ENCODE measurements at regions of chr11 and their contacts with region 1.

Region 1: GRCh38 chr11:86938900-86939880 is 16.0 kb downstream of the FZD4 start:
- DNase-seq: peak; percentile 38 to 81 (median 46)
- ATAC-seq: peak; percentile 59
- H3K4me3 ChIP-seq: no peak overlapping the region
- H3K27ac ChIP-seq: peak overlapping the region; percentile 75
- H3K4me1 ChIP-seq: peaks cover 18 to 53% of the 10 kb centered on the region in 2 experiments
- H3K27me3 ChIP-seq: no peaks in the 10 kb centered on the region
- CTCF ChIP-seq: peak; percentile 40 to 79 (median 67); a peak in 5 of 6 replicates
- EP300 ChIP-seq: no peak
- POLR2A ChIP-seq: no peak
- RAD21 ChIP-seq: peak; percentile 70 to 82

Region 2: DNA sequence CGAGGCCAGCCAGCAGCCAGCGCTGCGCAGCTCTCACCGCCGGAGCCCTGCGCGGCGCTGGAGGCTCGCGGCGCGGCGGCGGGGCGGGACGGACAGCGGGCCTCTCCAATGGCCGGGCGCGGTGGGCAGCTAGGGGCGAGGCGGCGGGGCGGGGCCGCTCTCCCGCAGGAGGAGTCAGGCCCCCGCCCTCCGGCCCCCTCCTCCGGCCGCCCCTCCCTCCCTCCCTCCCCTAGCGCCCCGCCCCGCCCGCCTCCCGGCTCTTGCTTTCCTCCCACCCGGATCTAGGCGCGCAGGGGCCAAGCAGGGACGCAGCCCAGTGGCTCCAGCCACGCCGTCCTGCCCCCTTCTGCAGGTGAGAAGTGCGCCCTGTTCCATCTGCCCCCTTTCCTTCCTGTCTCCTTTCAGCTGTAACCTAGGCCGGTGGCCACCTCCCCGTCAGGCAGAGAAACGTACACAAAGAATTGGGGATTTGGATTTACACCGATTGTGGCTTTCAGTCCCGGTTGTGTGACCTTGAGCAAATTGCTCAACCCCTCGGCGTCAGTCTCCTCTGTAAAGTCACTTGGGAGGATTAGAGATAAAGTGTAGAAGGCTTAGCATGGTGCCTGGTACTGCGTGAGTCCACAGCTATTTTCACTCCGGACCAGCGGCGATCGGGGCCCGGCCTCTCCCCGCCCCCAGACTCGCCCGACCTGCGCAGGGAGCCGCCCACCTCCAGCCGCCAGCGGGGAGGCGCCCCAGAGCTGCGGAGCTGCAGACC is 16.4 kb after region 1 on chr11 and contains the start of gene FZD4:
- CTCF ChIA-PET with region 1: no interaction called
- POLR2A ChIA-PET with region 1: interaction called, 18 read pairs
- in situ Hi-C with region 1: no loop called
- intact Hi-C with region 1: no loop called
- DNase-seq: peak; percentile 94 to 98 (median 98)
- ATAC-seq: peak; percentile 96
- H3K4me3 ChIP-seq: peak within 1 kb of the TSS; percentile 68
- H3K27ac ChIP-seq: peak within 1 kb of the TSS; percentile 75
- H3K4me1 ChIP-seq: peaks cover 18 to 29% of the 10 kb centered on the region in 2 experiments
- H3K27me3 ChIP-seq: no peaks in the 10 kb centered on the region
- CTCF ChIP-seq: peak; percentile 33 to 55 (median 42); a peak in 4 of 6 replicates
- EP300 ChIP-seq: no peak
- POLR2A ChIP-seq: peak; percentile 64
- RAD21 ChIP-seq: peak; percentile 52 to 62
- polyA plus RNA-seq, gene FZD4: 1.2 to 1.4 TPM

Region 3: GRCh38 chr11:87037450-87038234 is 98.5 kb after region 1 on chr11 and contains the start of gene TMEM135:
- CTCF ChIA-PET with region 1: no interaction called
- POLR2A ChIA-PET with region 1: interaction called, 3 read pairs
- in situ Hi-C with region 1: no loop called
- intact Hi-C with region 1: loop called (anchors 2 kb)
- DNase-seq: peak; percentile 97 to 98 (median 97)
- ATAC-seq: peak; percentile 95
- H3K4me3 ChIP-seq: peak within 1 kb of the TSS; percentile 81
- H3K27ac ChIP-seq: peak within 1 kb of the TSS; percentile 92
- H3K4me1 ChIP-seq: peaks cover 10 to 23% of the 10 kb centered on the region in 2 experiments
- H3K27me3 ChIP-seq: no peaks in the 10 kb centered on the region
- CTCF ChIP-seq: peak in 2 of 3 experiments; percentile 18 to 25; a peak in 3 of 6 replicates
- EP300 ChIP-seq: peak; percentile 33
- POLR2A ChIP-seq: peak; percentile 82
- RAD21 ChIP-seq: peak in 1 of 2 experiments; percentile 25; a peak in 3 of 4 replicates
- polyA plus RNA-seq, gene TMEM135: 24.0 to 24.9 TPM

Region 4: DNA sequence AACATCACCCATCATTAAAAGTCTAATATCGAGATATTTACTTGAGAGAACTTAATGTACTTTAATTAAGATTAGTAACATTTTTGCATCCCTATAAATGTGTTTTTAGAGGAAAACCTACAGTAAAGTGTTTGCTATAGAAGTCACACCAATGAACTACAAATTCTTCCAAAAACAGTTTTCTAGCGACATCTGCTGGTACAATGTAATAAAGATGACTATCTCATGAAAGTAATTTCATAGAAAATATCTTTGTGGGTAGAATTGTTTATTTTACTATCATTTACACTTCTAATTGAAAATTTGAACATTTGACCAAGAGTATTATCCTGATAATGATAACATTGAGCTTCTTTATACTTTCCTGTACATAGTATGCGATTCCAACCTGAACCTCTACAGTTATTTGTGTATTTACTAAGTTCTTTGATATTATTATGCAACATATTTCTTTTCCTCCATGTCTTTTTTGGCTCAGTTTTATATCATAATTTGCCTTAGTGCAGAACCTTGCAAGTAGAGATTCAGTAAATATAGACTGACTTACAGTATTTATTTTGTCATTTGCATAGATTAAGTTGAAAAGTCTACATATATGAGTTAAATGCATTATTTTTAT is 351.2 kb after region 1 on chr11:
- CTCF ChIA-PET with region 1: interaction called, 9 read pairs
- POLR2A ChIA-PET with region 1: no interaction called
- in situ Hi-C with region 1: no loop called
- intact Hi-C with region 1: loop called (anchors 1 kb)
- DNase-seq: peak; percentile 25 to 72 (median 33)
- ATAC-seq: peak; percentile 80
- H3K4me3 ChIP-seq: no peak overlapping the region
- H3K27ac ChIP-seq: no peak overlapping the region
- H3K4me1 ChIP-seq: no peaks in the 10 kb centered on the region
- H3K27me3 ChIP-seq: no peaks in the 10 kb centered on the region
- CTCF ChIP-seq: peak in 2 of 3 experiments; percentile 42 to 80; a peak in 3 of 6 replicates
- EP300 ChIP-seq: no peak
- POLR2A ChIP-seq: no peak
- RAD21 ChIP-seq: peak; percentile 88 to 90

Region 5: DNA sequence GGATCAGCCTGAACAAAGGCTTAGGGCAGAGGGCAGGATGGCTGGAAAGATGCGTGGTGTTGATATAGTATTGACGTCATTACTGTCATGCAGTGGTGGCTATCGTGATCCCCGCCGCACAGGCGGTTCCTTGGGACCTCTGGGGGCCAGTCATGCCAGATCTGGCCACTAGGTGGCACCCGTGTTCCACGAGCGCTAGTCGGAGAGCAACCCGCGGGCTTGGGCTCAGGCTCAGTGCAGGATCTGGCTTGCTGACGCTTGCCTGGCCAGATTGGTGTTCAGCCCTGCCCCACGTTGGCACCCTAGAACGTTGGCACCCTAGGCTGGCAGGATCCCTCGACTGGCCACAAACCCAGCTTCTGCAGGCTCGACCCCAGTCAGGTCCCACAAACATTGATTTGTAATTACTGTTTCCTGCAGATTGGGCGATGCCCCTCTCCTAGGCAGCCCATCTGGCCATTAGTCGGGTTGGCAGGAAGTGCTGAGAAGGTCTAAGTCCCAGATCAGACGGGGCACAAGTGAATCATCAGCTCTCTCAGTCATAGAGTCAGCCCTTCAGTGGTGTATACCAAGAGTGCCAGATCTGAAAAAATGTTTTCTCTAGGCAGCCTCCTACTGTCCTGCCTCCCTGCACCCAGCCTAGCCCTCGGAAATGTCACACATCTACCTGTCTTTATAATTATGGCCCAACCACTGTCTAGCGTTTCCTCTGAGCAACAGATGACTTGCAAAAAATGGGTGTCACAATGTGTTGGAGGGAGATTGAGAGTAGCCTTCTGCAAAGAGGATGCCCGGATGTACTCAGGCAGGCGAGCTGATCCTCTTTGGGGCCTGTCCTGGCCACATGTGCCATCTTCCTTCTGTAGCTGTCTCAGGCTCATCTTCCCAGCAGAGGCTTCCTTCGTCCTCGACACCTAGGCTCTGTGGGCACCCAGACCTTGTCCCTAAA is 413.8 kb after region 1 on chr11:
- CTCF ChIA-PET with region 1: no interaction called
- POLR2A ChIA-PET with region 1: no interaction called
- in situ Hi-C with region 1: no loop called
- intact Hi-C with region 1: loop called (anchors 5 kb)
- DNase-seq: peak; percentile 82 to 90 (median 86)
- ATAC-seq: peak; percentile 98
- H3K4me3 ChIP-seq: no peak overlapping the region
- H3K27ac ChIP-seq: no peak overlapping the region
- H3K4me1 ChIP-seq: peaks cover 3 to 4% of the 10 kb centered on the region in 2 experiments; a peak in 4 of 5 replicates
- H3K27me3 ChIP-seq: peaks cover 2 to 8% of the 10 kb centered on the region in 2 experiments; a peak in 1 of 5 replicates
- CTCF ChIP-seq: peak; percentile 92 to 97 (median 94)
- EP300 ChIP-seq: no peak
- POLR2A ChIP-seq: no peak
- RAD21 ChIP-seq: peak; percentile 86 to 95

Measured in K562 (cell line).